ENCODE measurements at regions of chr14 and their contacts with region 1.

Region 1: GRCh38 chr14:22852940-22853767 is 16.8 kb downstream of the MMP14 start:
- DNase-seq: peak; percentile 93
- ATAC-seq: peak; percentile 68
- H3K4me3 ChIP-seq: peak overlapping the region; percentile 68
- H3K27ac ChIP-seq: peak overlapping the region; percentile 97
- H3K4me1 ChIP-seq: peaks cover 40% of the 10 kb centered on the region
- H3K27me3 ChIP-seq: no peaks in the 10 kb centered on the region
- CTCF ChIP-seq: peak; percentile 94

Region 2: GRCh38 chr14:22386924-22387775 is 466.0 kb before region 1 on chr14:
- CTCF ChIA-PET with region 1: no interaction called
- POLR2A ChIA-PET with region 1: no interaction called
- intact Hi-C with region 1: loop called (anchors 10 kb)
- DNase-seq: peak; percentile 88
- ATAC-seq: no peak
- H3K4me3 ChIP-seq: no peak overlapping the region
- H3K27ac ChIP-seq: no peak overlapping the region
- H3K4me1 ChIP-seq: peaks cover 46% of the 10 kb centered on the region
- H3K27me3 ChIP-seq: no peaks in the 10 kb centered on the region
- CTCF ChIP-seq: peak; percentile 91

Region 3: GRCh38 chr14:22570132-22570949 is 282.8 kb before region 1 on chr14:
- CTCF ChIA-PET with region 1: no interaction called
- POLR2A ChIA-PET with region 1: no interaction called
- intact Hi-C with region 1: loop called (anchors 5 kb)
- DNase-seq: peak; percentile 92
- ATAC-seq: peak; percentile 65
- H3K4me3 ChIP-seq: no peak overlapping the region
- H3K27ac ChIP-seq: no peak overlapping the region
- H3K4me1 ChIP-seq: peaks cover 5% of the 10 kb centered on the region
- H3K27me3 ChIP-seq: no peaks in the 10 kb centered on the region
- CTCF ChIP-seq: peak; percentile 97

Region 4: DNA sequence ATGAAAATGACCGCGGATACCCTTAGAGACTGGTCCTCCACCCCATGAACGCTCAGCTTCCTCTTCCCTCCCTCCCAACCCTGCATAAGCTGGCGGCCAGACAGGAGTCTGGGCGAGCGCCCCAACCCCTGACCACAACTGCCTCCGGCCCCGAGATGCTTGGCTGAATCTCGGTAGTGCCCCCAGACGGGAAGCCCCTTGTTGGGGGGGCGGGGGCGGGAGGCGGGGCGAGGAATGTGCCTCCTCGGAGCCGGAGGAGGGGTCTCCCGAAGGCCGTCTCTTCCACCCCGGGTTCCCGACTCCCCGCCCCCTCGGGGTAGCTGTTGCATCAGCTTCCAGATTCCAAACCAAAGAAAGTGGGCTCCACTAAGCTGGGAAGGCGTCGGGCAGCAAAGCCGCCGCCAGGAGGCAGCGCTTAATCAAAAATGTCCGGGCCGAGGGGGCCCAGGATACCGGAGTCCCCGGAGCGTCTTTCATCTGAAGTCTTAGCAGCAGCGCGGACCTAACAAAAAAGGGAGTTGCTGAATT is 30.5 kb before region 1 on chr14:
- CTCF ChIA-PET with region 1: interaction called, 37 read pairs
- POLR2A ChIA-PET with region 1: interaction called, 3 read pairs
- intact Hi-C with region 1: loop called (anchors 1 kb)
- DNase-seq: peak; percentile 89
- ATAC-seq: peak; percentile 83
- H3K4me3 ChIP-seq: peak overlapping the region; percentile 62
- H3K27ac ChIP-seq: no peak overlapping the region
- H3K4me1 ChIP-seq: peaks cover 39% of the 10 kb centered on the region
- H3K27me3 ChIP-seq: no peaks in the 10 kb centered on the region
- CTCF ChIP-seq: peak; percentile 88

Region 5: GRCh38 chr14:22872033-22872832 is 19.1 kb after region 1 on chr14:
- CTCF ChIA-PET with region 1: interaction called, 3 read pairs
- POLR2A ChIA-PET with region 1: no interaction called
- intact Hi-C with region 1: loop called (anchors 1 kb)
- DNase-seq: peak; percentile 94
- ATAC-seq: peak; percentile 51
- H3K4me3 ChIP-seq: peak overlapping the region; percentile 88
- H3K27ac ChIP-seq: peak overlapping the region; percentile 94
- H3K4me1 ChIP-seq: peaks cover 18% of the 10 kb centered on the region
- H3K27me3 ChIP-seq: no peaks in the 10 kb centered on the region
- CTCF ChIP-seq: peak; percentile 97

Region 6: DNA sequence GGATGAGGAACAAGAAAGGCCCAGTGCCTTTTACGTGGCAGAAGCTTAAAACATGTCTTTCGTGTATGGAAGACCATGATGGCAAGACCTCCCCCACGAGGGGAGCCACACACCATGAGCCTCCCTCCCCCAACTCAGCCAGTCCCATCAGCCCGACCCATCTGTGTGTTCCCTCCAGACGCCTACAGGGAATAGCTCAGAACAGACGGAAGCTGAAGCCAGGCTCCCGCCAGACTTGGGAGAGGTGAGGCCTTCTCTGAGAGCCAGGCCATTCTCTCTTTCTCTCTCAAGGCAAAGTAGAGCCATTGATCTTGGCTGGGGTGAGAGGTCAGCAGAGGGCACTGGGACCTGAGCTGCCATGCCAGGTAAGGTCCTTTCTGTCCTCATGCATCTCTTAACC is 39.3 kb after region 1 on chr14:
- CTCF ChIA-PET with region 1: no interaction called
- POLR2A ChIA-PET with region 1: no interaction called
- intact Hi-C with region 1: no loop called
- DNase-seq: no peak
- ATAC-seq: no peak
- H3K4me3 ChIP-seq: no peak overlapping the region
- H3K27ac ChIP-seq: no peak overlapping the region
- H3K4me1 ChIP-seq: peaks cover 10% of the 10 kb centered on the region
- H3K27me3 ChIP-seq: no peaks in the 10 kb centered on the region
- CTCF ChIP-seq: no peak